Left cardiac atrium (tissue), 4 donors: ENCODE measurements at regions of chr1 and their contacts with region 1.

Region 1: DNA sequence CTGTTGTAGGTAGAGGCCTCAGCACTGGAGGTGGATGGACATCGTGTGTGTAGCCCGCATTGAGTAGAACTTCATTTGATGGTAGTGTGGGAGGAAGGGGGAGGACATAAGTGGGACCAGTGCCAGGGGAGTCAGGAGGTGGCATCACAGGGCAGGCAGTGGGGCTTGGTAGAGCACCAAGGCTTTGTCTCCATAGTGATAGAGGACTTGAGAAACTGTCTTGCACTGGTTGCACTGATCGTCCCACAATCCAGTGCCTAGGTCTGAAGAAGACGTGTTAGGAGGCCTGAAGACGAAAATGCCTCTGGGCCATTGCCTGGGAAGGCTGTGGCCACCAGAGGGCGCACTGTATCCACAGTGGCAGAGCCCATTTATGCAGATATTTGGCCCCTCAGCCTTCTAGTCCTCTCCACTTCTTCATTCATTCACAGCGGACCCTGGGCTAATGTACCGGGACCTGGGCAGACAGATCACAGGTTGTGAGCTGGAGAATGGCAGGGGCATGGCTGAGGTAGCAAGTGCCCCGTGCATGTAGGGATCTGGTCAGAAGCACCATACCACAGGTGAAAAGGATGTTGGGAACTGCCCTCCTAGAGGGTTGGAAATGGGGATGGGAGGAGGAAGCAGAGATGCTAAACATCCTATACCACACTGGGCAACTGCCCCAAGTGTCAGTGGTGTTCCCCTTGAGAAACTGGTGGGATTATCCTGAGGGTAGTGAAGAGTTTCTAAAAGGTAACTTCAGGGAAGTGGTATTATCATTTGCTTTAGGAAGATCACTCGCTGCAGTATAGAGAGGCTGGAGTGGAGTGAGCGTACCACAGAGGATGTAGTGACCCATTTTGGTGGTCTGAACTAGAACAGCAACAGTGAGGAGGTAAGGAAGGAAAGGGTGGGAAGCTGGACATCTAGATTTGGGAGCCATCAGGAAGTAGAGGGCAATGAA is 95.3 kb downstream of the PIK3R3 start:
- DNase-seq: peak; percentile 88
- ATAC-seq: peak; percentile 62 to 86

Region 2: DNA sequence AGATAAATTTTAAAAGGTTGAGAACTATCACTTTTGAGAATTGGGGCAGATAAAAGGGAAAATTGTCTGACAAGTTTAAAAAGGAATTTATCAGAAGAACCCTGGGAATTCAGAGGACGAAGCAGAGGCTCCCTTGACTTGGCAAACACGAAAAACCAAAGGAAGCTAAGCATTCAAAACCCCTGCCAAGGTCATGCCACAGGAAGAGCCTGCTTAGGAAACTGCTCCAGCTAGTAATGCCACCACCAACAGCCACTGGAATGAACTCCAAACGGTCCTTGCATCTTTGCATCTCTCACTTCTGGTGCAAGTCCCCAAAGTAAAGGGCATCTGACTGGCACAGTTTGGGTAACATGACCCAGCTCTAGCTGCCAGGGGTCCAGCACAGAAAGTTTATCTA is 358.0 kb before region 1 on chr1:
- intact Hi-C with region 1: no loop called
- DNase-seq: no peak
- ATAC-seq: peak in 1 of 2 donors; percentile 51

Region 3: GRCh38 chr1:46179138-46180081 is 142.2 kb after region 1 on chr1:
- intact Hi-C with region 1: loop called (anchors 1 to 5 kb)
- DNase-seq: peak; percentile 82
- ATAC-seq: peak; percentile 83 to 87

Region 4: DNA sequence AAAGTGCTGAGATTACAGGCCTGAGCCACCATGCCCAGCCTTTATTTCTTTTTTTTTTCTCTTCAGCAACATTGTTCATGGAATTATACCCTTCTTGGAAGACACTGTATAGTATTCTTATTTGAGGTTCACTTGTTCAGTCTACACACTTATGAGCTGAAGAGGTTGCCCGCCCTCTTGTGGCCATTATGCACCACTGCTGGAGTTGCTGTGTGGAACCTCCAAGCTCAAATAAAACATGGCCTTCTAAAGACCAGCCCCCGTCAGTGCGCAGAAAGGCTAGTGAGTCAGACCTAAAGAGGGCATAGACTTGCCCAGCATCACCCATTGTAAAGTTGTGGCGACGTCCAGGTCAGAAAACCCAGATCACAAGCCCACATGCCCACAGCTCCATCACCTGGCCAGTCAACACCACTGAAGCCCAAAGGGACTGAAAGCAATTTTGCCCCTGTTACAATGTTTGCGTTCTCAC is 186.3 kb after region 1 on chr1:
- intact Hi-C with region 1: loop called in 1 of 2 experiments (anchors 2 kb)
- DNase-seq: peak; percentile 77
- ATAC-seq: peak; percentile 90 to 96